Posterior vena cava (tissue), 2 donors: ENCODE measurements at regions of chr1 and their contacts with region 1.

Region 1: GRCh38 chr1:8026153-8026975 is at the start of gene ERRFI1:
- DNase-seq: peak; percentile 98
- total RNA-seq, gene ERRFI1: 84.4 to 151 TPM

Region 2: GRCh38 chr1:8121261-8122170 is 95.2 kb after region 1 on chr1:
- intact Hi-C with region 1: loop called in 1 of 2 experiments (anchors 5 kb)
- DNase-seq: no peak

Region 3: DNA sequence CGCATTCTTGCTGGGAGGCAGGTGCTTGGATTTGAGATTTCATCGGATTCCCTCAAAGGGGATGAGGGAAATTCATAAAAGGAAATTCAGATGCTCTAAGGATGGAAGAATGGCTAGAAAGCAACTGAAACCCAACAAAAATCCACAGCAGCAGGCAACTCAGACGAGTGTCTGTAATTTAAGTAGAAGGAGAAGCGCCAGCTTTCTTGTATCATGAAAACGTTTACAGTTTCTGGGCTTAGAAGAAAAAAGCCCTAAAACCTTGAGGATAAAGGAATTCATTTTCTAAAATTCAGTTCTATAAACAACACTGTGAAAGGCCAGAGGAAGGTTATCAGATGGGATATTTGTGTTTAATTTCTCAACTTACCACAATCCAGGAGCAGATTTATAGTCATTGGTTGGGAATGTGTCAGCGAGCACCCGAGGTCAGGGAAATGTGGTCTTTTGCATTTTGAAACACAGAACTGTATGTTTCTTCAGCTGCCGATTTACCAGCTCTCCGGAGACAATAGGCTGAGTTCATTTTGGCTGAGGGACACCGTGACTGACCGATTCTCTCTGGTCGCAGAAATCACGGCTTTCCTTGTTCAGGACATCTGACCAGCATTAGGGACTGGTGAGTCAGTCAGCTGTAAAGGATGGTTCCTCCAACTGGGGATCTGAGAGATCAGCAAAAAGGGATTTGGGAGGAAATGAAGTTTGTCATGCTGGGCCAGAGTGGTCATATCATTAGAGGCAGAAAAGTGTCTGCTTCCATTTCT is 111.3 kb after region 1 on chr1:
- intact Hi-C with region 1: loop called in 1 of 2 experiments (anchors 5 kb)
- DNase-seq: no peak

Region 4: GRCh38 chr1:8211589-8212442 is 185.5 kb after region 1 on chr1:
- intact Hi-C with region 1: loop called in 1 of 2 experiments (anchors 10 kb)
- DNase-seq: no peak

Region 5: GRCh38 chr1:8477166-8477982 is 451.0 kb after region 1 on chr1:
- intact Hi-C with region 1: no loop called
- DNase-seq: no peak